A549 (cell line): ENCODE measurements at regions of chr6 and their contacts with region 1.

Region 1: GRCh38 chr6:24581084-24581669 is 64.8 kb downstream of the KIAA0319 start:
- DNase-seq: peak; percentile 30 to 60
- ATAC-seq: peak; percentile 92 to 97
- H3K4me3 ChIP-seq: no peak overlapping the region
- H3K27ac ChIP-seq: no peak overlapping the region
- H3K4me1 ChIP-seq: peaks cover 5% of the 10 kb centered on the region; the same call in 2 of the 3 replicates
- CTCF ChIP-seq: peak; percentile 63
- EP300 ChIP-seq: no peak
- POLR2A ChIP-seq: no peak
- RAD21 ChIP-seq: peak; percentile 70 to 73

Region 2: DNA sequence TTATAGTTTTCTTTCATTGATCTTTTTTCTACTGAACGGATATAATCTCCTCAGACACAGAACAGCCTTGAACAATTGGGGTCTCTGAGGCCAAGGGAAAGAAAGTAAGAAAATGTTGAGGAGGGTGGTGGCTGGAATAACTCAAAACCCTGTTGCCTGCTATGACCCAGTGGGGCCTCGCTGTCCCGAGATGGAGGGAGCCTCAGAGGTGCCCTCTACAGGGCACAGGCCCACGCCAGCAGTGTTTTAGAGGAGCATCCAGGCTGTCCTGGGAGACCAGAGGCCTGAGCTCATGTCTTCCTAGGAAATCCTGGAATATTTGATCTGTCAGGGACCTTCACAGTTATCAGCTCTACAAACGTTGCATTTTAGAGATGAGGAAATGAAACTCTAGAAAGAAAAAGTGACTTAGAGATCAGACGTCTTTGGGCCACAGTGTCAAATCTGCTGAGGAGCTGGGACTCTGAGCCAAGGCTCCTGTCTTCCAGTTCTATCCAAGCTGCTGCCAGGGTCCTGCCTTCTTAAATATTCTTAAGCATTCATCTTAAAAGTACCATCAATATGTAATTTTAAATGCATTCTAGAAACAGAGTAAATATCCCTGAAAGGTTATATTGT is 60.1 kb before region 1 on chr6:
- CTCF ChIA-PET with region 1: interaction called, 13 read pairs
- POLR2A ChIA-PET with region 1: no interaction called
- DNase-seq: peak; percentile 48 to 63
- ATAC-seq: peak; percentile 99
- H3K4me3 ChIP-seq: no peak overlapping the region
- H3K27ac ChIP-seq: no peak overlapping the region
- H3K4me1 ChIP-seq: no peaks in the 10 kb centered on the region
- CTCF ChIP-seq: peak; percentile 50
- EP300 ChIP-seq: no peak
- POLR2A ChIP-seq: no peak
- RAD21 ChIP-seq: peak; percentile 37 to 38; a peak in 3 of 5 replicates

Region 3: DNA sequence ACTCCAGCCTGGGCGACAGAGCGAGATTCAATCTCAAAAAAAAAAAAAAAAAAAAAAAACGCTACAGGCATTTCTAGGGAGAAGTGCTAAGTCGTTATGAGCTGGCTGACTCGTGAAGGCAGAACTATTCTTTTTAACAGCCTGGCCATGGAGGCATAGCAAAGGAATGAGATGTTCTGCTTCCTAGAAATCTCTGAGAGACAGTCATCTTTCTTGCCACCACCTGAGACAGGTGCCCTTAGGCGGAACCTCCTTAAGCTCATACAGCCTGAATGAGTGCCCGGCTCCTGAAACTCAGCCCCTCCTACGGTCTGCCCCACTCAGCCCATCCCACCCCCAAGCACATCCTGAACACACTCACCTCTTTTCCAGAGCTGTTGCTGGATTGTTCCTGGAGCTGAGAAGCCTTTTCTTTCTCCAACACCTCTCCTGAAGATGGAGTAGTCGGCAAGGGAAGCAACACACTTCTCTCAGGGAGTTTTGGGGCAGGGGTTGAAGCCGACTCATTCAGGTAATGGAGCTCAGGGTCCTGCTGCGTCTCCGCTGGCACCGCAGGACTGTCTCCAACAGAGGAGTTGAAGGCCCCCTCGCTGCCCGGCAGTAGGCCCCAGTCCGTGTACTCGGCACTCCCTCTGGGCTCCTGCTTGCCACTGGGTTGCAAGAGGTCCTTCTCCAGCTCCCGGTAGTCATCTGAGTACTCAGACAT is 14.5 kb after region 1 on chr6:
- CTCF ChIA-PET with region 1: interaction called, 11 read pairs
- POLR2A ChIA-PET with region 1: no interaction called
- DNase-seq: no peak
- ATAC-seq: no peak
- H3K4me3 ChIP-seq: no peak overlapping the region
- H3K27ac ChIP-seq: no peak overlapping the region
- H3K4me1 ChIP-seq: no peaks in the 10 kb centered on the region
- CTCF ChIP-seq: no peak
- EP300 ChIP-seq: no peak
- POLR2A ChIP-seq: no peak
- RAD21 ChIP-seq: no peak

Region 4: DNA sequence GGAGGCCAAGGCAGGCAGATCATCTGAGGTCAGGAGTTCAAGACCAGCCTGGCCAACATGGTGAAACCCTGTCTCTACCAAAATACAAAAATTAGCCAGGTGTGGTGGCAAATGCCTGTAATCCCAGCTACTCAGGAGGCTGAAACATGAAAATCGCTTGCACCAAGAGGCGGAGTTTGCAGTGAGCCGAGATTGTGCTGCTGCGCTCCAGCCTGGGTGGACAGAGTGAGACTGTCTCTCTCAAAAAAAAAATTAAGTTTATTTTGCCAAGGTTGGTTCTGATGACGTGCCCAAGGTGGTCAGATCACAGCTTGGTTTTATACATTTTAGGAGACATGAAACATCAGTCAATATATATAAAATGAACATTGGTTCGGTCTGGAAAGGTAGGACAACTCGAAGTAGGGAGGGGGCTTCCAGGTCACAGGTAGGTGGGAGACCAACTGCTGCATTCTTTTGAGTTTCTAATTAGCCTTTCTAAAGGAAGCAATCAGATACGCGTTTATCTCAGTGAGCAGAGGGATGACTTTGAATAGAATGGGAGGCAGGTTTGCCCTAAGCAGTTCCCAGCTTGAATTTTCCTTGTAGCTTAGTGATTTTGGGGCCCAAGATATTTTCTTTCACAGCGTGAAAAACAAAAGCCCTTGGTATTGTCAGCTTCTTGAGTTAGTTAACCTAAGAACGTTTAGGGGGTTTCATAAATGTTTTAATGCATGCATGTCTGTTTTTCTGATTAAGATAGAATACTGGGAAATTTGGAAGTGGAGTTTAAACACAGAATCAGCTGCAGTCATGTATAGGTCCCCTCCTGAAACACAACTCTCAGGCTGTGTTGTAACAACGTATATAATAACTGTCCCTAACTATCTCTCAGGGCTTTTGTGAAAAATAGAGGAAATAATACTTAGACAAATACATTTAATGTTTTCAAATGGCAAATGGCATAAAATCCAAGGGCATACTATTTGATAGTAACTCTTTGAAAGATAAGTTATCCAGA is 102.4 kb after region 1 on chr6:
- CTCF ChIA-PET with region 1: interaction called, 11 read pairs
- POLR2A ChIA-PET with region 1: no interaction called
- DNase-seq: no peak
- ATAC-seq: no peak
- H3K4me3 ChIP-seq: no peak overlapping the region
- H3K27ac ChIP-seq: no peak overlapping the region
- H3K4me1 ChIP-seq: no peaks in the 10 kb centered on the region
- CTCF ChIP-seq: no peak
- EP300 ChIP-seq: no peak
- POLR2A ChIP-seq: no peak
- RAD21 ChIP-seq: no peak

Region 5: DNA sequence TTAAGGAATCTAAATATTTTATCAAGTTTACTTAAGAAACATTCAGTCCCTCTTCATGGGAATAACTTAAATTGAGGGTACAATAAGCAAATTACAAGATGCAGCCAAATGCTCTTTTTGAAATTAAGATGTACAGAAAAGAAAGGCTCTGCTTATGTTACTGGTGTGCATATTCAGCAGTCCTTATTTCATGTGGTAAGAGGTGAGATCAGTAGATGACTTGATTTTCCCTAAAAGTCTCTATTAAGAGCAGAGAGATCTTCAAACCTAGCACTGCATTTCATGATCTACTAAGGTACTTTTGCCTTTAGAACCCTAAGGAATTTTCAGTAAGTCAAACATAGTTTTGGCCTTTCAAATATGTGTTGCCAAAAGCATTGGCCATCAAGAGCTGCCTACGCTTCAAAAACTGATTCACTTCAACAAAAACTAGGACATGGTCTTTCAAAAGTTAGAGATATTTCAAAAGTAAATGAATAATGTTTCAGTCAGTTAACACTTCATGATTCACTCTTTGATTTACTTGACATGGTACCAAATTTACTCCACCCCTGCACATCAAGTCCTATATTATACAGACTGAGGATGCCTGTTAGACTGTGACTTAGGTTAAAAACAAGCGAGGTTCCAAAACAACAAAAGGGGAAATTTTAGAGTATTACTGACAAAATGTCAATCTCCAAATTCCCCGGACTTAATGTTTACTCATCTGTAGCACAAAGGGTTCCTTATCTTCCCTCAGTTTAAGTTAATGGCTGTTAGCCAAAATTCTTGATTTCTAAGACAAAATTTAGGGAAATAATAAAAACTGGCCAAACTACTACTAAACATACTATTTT is 118.6 kb after region 1 on chr6:
- CTCF ChIA-PET with region 1: interaction called, 32 read pairs
- POLR2A ChIA-PET with region 1: no interaction called
- DNase-seq: no peak
- ATAC-seq: no peak
- H3K4me3 ChIP-seq: no peak overlapping the region
- H3K27ac ChIP-seq: no peak overlapping the region
- H3K4me1 ChIP-seq: no peaks in the 10 kb centered on the region; the same call in 2 of the 3 replicates
- CTCF ChIP-seq: no peak
- EP300 ChIP-seq: no peak
- POLR2A ChIP-seq: no peak
- RAD21 ChIP-seq: no peak

Region 6: GRCh38 chr6:24766680-24767462 is 185.7 kb after region 1 on chr6:
- CTCF ChIA-PET with region 1: interaction called, 16 read pairs
- POLR2A ChIA-PET with region 1: interaction called, 3 read pairs
- DNase-seq: peak; percentile 20 to 21
- ATAC-seq: peak in 1 of 2 experiments; percentile 68; a peak in 3 of 6 replicates
- H3K4me3 ChIP-seq: no peak overlapping the region
- H3K27ac ChIP-seq: no peak overlapping the region
- H3K4me1 ChIP-seq: no peaks in the 10 kb centered on the region
- CTCF ChIP-seq: peak; percentile 59
- EP300 ChIP-seq: no peak
- POLR2A ChIP-seq: no peak
- RAD21 ChIP-seq: peak; percentile 68